Activated CD4-positive, alpha-beta T cell treated with anti-CD3 and anti-CD28 coated beads, Interleukin-2, amount 10 ng/mL, durations not matched to agents 24 days and 14 days (primary cell): ENCODE measurements at regions of chr19 and their contacts with region 1.

Region 1: DNA sequence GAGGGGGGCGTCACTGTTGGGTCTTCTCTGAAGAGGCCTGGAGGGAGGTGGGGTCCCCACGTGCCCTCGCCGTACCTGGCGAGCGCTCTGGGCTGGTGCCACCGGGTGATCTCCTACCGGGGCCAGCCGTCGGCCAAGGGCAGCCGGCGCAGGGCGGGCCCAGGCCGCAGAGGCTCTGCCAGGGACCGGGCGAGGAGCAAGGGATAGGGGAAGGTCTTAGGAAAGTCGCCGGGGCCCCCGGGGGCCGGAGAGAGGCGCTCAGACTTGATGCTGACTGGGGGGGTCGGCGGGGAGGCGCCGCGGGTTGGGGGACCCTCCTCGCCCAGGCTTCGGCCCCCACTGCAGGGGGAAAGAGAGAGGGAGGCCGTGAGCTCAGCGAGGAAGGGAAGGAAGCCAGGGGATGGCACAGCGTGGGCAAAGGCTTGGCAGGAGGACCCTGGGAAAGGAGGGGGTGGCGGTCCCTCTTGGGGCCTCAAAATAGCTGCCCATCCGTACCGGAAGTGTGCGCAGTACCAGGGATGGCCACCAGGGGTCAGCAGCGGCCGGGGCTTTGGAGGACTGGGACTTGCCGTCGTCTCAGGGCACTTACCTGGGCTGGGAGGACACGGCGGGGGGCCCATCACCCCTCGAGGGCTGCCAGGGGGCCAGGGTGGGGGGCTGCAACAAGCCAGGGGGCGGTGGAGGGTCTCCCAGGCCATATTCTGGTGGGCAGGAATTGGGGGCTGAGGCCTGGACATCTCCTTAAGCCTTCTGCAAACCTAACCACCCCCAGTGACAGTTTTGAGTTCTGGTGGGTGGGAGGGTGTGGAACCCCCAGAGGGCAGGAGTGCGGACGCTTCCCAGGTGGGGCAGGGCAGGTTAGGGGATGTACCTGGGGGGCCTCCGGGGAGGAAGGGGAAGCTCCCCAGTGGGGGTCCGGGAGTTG is 7.7 kb upstream of the TMEM161A start:
- DNase-seq: peak; percentile 97
- H3K4me3 Mint-ChIP-seq: no peak overlapping the region
- H3K27ac Mint-ChIP-seq: no peak overlapping the region
- H3K4me1 Mint-ChIP-seq: peaks cover 2% of the 10 kb centered on the region
- H3K27me3 Mint-ChIP-seq: no peaks in the 10 kb centered on the region

Region 2: DNA sequence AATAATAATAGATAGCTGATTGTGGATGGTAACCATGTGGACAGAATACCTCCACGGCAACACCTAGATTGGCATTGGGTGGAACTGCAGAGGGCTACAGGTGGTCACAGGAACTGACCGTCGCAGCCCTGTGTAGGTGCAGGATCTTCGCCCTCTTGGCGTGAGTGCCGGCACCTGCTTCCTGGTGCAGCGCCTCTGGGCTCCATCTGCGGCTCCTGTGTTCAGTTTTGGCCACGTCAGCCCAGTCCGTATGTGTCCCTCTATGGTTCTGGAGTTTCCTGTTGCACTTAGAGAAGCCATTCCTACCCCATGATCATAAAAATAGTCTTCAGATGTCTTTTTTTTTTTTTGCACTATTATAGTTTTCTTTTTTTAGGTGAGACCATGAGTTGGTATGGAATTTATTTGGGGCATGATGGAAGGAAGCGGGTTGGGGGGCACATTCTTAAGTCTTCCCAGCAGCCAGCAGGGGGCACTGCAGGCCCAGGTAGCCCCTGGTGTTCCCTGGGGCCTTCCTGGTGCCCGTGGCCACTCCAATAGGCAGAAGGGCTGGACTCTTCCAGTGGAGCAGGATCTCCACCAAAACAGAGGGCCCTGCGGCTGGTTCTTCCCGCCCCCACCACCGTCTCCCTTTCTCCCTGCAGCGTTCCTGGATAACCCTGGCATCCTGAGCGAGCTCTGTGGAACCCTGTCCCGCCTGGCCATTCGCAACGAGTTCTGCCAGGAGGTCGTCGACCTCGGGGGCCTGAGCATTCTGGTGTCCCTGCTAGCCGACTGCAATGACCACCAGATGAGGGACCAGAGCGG is 92.2 kb before region 1 on chr19:
- intact Hi-C with region 1: no loop called
- DNase-seq: peak; percentile 86
- H3K4me3 Mint-ChIP-seq: no peak overlapping the region
- H3K27ac Mint-ChIP-seq: no peak overlapping the region
- H3K4me1 Mint-ChIP-seq: no peaks in the 10 kb centered on the region
- H3K27me3 Mint-ChIP-seq: no peaks in the 10 kb centered on the region

Region 3: GRCh38 chr19:19170053-19170872 is 24.3 kb after region 1 on chr19 and contains the start of gene MEF2B:
- intact Hi-C with region 1: loop called (anchors 1 kb)
- DNase-seq: peak; percentile 94
- H3K4me3 Mint-ChIP-seq: peak within 1 kb of the TSS; percentile 43
- H3K27ac Mint-ChIP-seq: no peak within 1 kb of the TSS
- H3K4me1 Mint-ChIP-seq: peaks cover 12% of the 10 kb centered on the region
- H3K27me3 Mint-ChIP-seq: peaks cover 4% of the 10 kb centered on the region
- total RNA-seq, gene MEF2B: 2.9 and 3.0 TPM in 2 replicates

Region 4: DNA sequence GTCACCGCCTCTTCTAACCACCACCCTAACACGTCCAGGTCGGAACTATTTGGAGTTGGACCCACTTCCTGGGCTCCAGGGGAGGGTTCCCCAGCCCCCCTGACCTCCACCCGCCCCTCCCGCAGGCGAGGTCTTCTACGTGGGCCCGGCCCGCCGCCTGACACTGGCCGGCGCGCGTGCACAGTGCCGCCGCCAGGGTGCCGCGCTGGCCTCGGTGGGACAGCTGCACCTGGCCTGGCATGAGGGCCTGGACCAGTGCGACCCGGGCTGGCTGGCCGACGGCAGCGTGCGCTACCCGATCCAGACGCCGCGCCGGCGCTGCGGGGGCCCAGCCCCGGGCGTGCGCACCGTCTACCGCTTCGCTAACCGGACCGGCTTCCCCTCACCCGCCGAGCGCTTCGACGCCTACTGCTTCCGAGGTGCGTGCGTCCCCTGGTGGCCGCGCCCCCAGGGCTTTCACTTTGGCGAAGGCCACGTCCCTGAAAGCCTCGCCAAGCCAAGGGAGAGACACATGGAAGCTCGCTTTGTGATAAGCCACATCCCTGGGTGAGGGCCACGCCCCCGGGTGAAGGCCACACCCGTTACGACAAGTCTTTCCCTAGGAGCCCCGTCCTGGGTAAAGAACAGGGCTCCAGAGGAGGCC is 79.0 kb after region 1 on chr19:
- intact Hi-C with region 1: loop called (anchors 1 kb)
- DNase-seq: peak; percentile 94
- H3K4me3 Mint-ChIP-seq: peak overlapping the region; percentile 80
- H3K27ac Mint-ChIP-seq: peak overlapping the region; percentile 34
- H3K4me1 Mint-ChIP-seq: no peaks in the 10 kb centered on the region
- H3K27me3 Mint-ChIP-seq: peaks cover 18% of the 10 kb centered on the region